CD4-positive, alpha-beta memory T cell (primary cell): ENCODE measurements at regions of chr2 and their contacts with region 1.

Region 1: DNA sequence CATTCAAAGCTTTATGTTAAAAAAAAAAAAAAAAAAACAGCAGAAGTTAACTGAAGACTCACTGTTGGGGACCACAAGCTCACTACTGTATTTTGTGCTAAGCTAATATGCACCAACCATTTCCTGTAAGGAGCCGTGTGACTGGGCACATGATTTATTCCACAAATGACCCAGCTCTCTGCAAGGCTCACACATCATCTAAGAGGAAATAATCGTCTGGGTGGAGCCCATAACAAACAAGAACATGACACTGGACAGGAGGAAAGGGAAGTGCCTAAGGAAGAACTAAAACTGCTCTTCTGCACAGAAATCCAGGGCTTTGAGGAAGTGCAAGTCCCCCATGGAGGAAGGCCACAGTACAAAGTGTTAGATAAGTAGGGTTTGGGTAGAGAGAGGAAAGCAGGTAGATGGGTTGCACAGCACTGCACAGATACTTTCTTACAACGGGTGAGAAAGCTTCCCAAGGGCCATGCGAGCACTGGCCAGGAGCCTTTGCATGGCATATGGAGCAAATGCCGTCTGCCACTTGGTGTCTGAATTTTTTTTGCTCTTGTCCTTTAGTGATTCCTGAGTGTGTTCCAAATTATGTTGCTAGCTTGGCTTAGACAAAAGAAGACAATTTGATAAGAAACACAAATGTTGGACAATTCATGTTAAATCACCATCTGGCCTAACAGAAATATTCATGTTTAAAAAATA is 24.4 kb downstream of the NFE2L2 start:
- DNase-seq: peak; percentile 43 to 62 (median 49)
- H3K4me3 ChIP-seq: no peak overlapping the region
- H3K4me3 Mint-ChIP-seq: peak overlapping the region in 7 of 8 donors; percentile 13 to 78 (median 64)
- H3K27ac ChIP-seq: peak overlapping the region; percentile 22
- H3K27ac Mint-ChIP-seq: peak overlapping the region; percentile 44 to 96 (median 89)
- H3K4me1 ChIP-seq: peaks cover 85% of the 10 kb centered on the region
- H3K4me1 Mint-ChIP-seq: peaks cover 56 to 89% (median 72%) of the 10 kb centered on the region in 4 donors
- H3K27me3 ChIP-seq: no peaks in the 10 kb centered on the region
- H3K27me3 Mint-ChIP-seq: no peaks in the 10 kb centered on the region

Region 2: GRCh38 chr2:177229448-177230242 is 10.4 kb before region 1 on chr2:
- CTCF ChIA-PET with region 1: interaction called, 3 read pairs
- POLR2A ChIA-PET with region 1: interaction called, 38 read pairs
- intact Hi-C with region 1: no loop called
- DNase-seq: no peak
- H3K4me3 ChIP-seq: no peak overlapping the region
- H3K4me3 Mint-ChIP-seq: peak overlapping the region in 1 of 8 donors; percentile 15
- H3K27ac ChIP-seq: no peak overlapping the region
- H3K27ac Mint-ChIP-seq: peak overlapping the region in 6 of 7 donors; percentile 7 to 88 (median 66)
- H3K4me1 ChIP-seq: no peaks in the 10 kb centered on the region
- H3K4me1 Mint-ChIP-seq: peaks cover 25 to 60% (median 39%) of the 10 kb centered on the region in 4 donors
- H3K27me3 ChIP-seq: no peaks in the 10 kb centered on the region
- H3K27me3 Mint-ChIP-seq: no peaks in the 10 kb centered on the region

Region 3: GRCh38 chr2:177254433-177255226 is 14.5 kb after region 1 on chr2:
- CTCF ChIA-PET with region 1: interaction called, 5 read pairs
- POLR2A ChIA-PET with region 1: interaction called, 7 read pairs
- intact Hi-C with region 1: loop called (anchors 1 kb)
- DNase-seq: no peak
- H3K4me3 ChIP-seq: no peak overlapping the region
- H3K4me3 Mint-ChIP-seq: peak overlapping the region in 4 of 8 donors; percentile 40 to 78 (median 54)
- H3K27ac ChIP-seq: no peak overlapping the region
- H3K27ac Mint-ChIP-seq: peak overlapping the region; percentile 15 to 95 (median 74)
- H3K4me1 ChIP-seq: peaks cover 97% of the 10 kb centered on the region
- H3K4me1 Mint-ChIP-seq: peaks cover 74 to 99% (median 88%) of the 10 kb centered on the region in 4 donors
- H3K27me3 ChIP-seq: no peaks in the 10 kb centered on the region
- H3K27me3 Mint-ChIP-seq: no peaks in the 10 kb centered on the region